ENCODE measurements at regions of chr12 and their contacts with region 1.

Region 1: DNA sequence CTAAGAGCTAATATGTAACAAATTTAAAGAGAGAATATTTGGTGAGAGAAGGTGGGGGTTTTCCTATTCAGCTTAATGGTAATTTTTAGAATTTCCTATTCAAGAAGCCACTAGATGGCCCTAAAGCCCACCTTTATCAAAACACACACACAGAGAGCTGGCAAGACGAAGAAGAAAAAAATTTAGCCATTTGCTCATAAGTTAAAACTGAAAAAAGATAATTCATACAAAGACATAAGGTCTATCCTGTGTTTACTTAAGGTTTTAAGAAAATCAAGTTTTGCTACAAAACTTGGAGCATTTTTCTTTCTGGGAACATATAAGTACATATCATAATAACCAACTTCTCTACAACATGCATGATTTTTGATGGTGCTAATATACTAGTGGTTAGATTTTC is 46.8 kb upstream of the PCED1B start:
- DNase-seq: peak; percentile 77
- ATAC-seq: peak; percentile 86
- H3K4me3 ChIP-seq: no peak overlapping the region
- H3K27ac ChIP-seq: no peak overlapping the region
- H3K4me1 ChIP-seq: peaks cover 6% of the 10 kb centered on the region
- H3K27me3 ChIP-seq: no peaks in the 10 kb centered on the region
- CTCF ChIP-seq: peak; percentile 75
- POLR2A ChIP-seq: no peak
- RAD21 ChIP-seq: peak; percentile 86

Region 2: DNA sequence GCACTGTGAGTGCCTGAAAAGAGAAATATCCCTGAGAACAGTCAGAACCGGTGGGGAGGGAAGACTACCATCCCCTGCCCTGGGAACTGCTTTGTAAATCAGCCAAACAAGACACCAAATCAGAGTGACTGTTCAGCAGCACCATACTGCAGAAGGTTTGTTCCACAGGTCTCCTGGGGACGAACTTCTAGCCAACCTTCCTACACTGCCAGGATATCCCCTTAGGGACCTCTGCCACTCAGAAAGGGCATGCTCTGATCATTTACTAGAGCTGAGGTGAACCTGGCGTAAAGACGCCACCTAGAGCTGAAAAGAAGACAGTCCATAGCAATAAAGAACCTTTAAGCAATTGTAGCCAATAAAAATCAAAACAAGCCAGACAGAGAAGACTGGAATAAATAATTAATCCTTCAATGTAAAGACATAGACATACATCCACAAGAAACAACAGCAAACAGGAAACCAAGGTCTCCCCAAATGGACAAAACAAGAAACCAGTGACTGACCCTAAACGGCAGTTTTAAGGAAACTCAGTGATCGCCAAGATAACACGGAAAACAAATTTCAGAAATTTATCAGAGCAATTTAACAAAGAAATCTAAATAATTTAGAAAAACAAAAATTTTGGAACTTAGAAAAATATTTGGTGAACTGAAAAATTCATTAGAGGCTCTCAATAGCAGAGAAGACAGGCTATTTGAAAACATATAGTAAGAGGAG is 275.2 kb after region 1 on chr12:
- CTCF ChIA-PET with region 1: interaction called, 10 read pairs
- POLR2A ChIA-PET with region 1: interaction called, 3 read pairs
- dilution Hi-C with region 1: no loop called
- in situ Hi-C with region 1: loop called (anchors 5 kb)
- intact Hi-C with region 1: loop called (anchors 1 kb)
- DNase-seq: peak; percentile 73
- ATAC-seq: peak; percentile 91
- H3K4me3 ChIP-seq: no peak overlapping the region
- H3K27ac ChIP-seq: no peak overlapping the region
- H3K4me1 ChIP-seq: peaks cover 6% of the 10 kb centered on the region
- H3K27me3 ChIP-seq: no peaks in the 10 kb centered on the region
- CTCF ChIP-seq: peak; percentile 80
- POLR2A ChIP-seq: no peak
- RAD21 ChIP-seq: peak; percentile 90

Region 3: GRCh38 chr12:47547085-47547484 is 514.4 kb after region 1 on chr12:
- CTCF ChIA-PET with region 1: no interaction called
- POLR2A ChIA-PET with region 1: no interaction called
- dilution Hi-C with region 1: no loop called
- in situ Hi-C with region 1: no loop called
- intact Hi-C with region 1: loop called (anchors 5 kb)
- DNase-seq: peak; percentile 69
- ATAC-seq: peak; percentile 89
- H3K4me3 ChIP-seq: no peak overlapping the region
- H3K27ac ChIP-seq: no peak overlapping the region
- H3K4me1 ChIP-seq: no peaks in the 10 kb centered on the region
- H3K27me3 ChIP-seq: peaks cover 14% of the 10 kb centered on the region
- CTCF ChIP-seq: peak; percentile 69
- POLR2A ChIP-seq: no peak
- RAD21 ChIP-seq: peak; percentile 68

Region 4: DNA sequence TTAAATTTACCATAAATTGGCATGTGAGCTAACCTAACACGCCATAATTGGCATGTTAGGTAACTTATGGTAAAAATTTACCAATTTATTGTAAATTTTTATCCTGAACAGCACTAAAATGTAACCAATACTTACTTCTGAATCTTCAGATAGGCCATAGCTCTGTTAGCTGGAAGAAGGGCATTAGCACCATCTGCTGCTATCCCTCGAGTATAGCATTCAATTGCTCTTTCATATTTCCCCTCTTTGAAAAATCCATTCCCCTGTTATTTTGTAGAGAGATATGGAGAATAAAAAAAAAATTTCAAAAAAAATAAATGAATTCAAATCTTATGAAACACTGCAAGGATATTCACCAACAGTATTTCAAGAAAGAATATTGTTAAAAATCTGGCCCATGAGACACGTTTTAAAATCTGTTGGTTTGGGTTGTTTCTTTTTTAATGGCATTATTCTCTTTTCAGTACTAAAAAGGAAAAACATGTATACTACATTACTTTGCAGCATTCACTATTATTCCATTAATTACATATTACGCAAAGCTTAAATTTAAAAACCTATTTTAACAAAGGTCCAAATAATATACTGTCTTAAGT is 654.1 kb after region 1 on chr12:
- CTCF ChIA-PET with region 1: interaction called, 4 read pairs
- POLR2A ChIA-PET with region 1: no interaction called
- dilution Hi-C with region 1: no loop called
- in situ Hi-C with region 1: loop called (anchors 10 kb)
- intact Hi-C with region 1: loop called (anchors 1 kb)
- DNase-seq: peak; percentile 67
- ATAC-seq: peak; percentile 97
- H3K4me3 ChIP-seq: no peak overlapping the region
- H3K27ac ChIP-seq: no peak overlapping the region
- H3K4me1 ChIP-seq: no peaks in the 10 kb centered on the region
- H3K27me3 ChIP-seq: no peaks in the 10 kb centered on the region
- CTCF ChIP-seq: peak; percentile 82
- POLR2A ChIP-seq: no peak
- RAD21 ChIP-seq: peak; percentile 86

Measured in IMR-90 (cell line).